Cardiac septum (tissue), 1 donor: ENCODE measurements at regions of chr15 and their contacts with region 1.

Region 1: DNA sequence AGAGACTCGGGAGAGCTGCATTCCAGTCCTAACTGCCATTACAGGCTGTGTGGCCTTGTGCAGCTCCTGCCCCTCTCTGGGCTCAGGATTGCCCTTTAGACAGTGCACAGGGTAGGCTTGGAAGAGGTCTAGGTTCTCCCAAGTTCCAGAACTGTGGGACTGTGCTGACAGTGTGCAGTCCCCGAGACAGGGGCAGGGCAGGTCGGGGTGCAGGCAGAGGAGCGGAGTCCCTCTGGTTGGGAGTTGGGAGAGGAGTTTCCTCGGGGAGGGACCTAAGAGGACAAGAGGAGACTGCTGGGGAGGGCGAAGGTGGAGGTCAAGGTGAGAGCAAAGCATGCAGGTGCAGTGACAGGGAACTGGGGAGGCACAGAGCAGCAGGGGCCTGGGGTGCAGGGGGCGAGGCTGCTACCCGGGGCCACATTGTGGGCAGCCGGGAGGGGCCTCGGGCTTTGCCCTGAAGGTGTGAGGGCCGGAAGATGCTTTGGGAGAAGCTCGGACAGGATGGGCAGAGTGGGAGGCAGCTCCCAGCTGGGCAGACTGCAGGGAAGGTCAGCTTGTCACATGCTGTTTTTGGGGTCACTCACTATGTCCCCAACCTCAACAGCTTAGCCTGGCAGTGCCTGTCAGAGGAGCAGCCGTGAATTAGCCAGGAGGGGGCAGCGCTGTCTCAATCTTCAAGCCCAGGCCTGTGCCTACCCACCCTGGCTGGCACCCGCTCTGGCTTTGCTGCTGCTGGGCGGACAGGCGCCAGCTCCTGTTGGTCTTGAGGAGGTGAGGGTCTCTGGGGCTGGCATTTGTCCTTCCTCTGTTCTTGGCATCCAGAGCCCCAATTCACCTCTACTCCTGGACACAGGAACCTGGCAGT is 15.4 kb upstream of the CSPG4 start:
- DNase-seq: no peak

Region 2: DNA sequence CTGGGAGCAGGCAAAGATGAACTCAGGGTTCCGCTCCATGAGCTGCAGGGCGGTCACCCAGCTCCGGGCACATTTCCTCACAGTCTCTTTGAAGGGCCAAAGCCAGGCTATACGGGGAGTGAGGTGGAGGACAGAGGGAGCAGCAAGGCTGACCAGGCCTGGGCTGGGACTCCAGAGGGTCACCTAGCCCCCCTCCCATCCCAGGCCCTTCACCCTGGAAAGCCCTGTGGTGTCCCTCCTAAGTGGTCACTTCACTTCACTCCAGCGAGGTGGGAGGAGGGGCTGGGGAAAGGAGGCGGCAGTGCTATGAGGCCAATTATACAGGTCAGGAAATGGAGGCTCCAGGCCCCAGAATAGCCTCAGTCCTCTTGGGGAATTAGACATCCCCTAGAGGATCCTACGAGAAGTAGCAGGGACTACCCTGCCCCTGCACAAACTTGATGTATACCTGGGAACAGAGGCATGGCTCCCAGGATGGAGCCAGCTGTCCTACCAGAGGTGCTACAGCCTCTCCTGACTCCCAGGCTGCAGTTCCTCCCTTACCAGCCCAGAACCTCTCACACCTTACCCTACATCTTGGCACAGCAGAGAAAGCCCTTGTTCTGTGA is 365.3 kb before region 1 on chr15:
- intact Hi-C with region 1: no loop called
- DNase-seq: no peak

Region 3: DNA sequence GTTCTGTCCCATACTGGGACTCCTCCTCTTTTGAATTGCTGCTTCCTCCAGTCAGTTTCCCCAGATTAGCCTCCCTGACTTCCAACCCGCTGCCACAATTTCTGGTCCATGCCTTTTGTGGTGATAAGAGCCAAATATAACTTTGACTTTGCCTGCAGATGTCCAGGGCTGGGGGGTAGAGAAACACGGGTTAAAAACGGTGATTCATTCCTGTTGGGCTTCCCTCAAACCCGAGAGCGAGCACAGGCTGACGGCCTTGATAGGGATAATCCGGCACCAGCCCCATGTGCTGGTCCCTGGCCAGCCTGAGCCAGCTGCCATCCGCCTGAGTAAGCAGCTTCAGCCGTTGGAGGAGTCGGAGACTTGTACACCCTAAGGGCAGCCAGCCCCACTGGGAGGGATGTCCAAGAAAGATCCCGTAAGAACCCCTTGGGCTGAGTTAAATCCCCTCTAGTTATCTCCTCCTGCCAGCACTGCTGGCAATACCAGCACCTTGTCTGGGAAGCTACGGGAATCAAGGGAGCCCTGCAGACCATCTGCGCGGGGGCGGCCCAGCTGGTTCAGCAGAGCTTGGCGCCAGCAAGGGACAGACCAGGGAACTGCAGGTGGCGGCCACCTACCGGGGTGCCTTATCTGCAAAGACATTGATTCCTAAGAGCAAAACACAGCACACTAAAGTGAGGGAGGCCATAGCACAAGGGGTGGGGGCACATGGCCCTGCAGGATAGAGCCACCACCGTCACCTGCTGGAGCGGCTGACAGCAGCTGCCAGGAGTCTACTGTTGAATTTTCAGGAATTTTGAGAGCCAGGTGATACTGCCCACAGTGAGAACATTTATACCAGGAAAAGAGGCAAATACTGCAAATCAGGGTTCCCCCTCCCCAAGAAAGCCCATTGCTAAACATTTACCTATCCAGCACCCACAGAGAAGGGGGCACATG is 33.6 kb before region 1 on chr15:
- intact Hi-C with region 1: loop called (anchors 5 kb)
- DNase-seq: no peak

Region 4: DNA sequence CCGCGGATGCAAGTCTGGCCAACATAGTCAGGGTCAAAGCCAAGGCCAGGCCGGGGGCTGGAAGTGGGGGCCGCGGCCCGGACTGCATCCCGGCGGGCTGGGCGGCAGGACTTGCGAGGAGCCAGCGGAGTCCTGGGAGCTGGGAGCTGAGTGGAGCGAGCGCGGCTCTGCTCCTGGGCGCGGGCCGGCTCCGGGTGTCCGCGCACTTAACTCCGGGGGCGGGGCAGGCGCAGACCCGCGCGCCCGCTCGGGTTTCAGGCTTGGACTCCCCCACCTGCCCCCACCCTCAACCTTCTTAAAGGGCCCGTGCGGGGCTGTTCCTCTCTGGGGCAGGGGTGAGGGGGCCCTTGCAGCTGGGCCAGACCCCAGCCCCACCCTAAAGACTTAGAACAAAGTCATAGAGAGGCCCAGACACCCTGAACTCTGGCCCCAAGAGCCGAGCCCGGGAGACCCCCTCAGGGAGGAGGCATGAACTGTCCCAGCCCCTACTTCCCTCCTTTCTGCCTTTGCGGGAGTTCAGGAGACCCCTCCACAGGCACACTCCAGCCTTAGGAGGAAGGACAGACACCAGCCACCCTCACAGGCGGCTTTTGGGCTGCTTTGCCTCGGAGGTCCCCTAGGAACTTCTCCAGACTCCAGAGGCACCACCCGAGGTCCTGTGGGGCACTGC is 15.3 kb before region 1 on chr15 and contains the start of gene CSPG4:
- intact Hi-C with region 1: no loop called
- DNase-seq: no peak
- total RNA-seq, gene CSPG4: 21.3 TPM

Region 5: GRCh38 chr15:75801859-75802593 is 73.9 kb after region 1 on chr15:
- intact Hi-C with region 1: loop called (anchors 2 kb)
- DNase-seq: peak; percentile 87